ENCODE measurements at regions of chr17 and their contacts with region 1.

Region 1: GRCh38 chr17:44199553-44200477 is at the start of gene ATXN7L3:
- DNase-seq: peak; percentile 99
- ATAC-seq: peak; percentile 80 to 82
- H3K4me3 ChIP-seq: peak within 1 kb of the TSS; percentile 82 to 96 (median 86)
- H3K27ac ChIP-seq: peak within 1 kb of the TSS; percentile 94 to 98 (median 95)
- H3K4me1 ChIP-seq: peaks cover 9 to 15% of the 10 kb centered on the region in 2 donors
- H3K27me3 ChIP-seq: no peaks in the 10 kb centered on the region
- CTCF ChIP-seq: no peak
- POLR2A ChIP-seq: peak; percentile 59 to 65
- total RNA-seq, gene ATXN7L3: 39.3 to 46.0 (median 40.6) TPM

Region 2: DNA sequence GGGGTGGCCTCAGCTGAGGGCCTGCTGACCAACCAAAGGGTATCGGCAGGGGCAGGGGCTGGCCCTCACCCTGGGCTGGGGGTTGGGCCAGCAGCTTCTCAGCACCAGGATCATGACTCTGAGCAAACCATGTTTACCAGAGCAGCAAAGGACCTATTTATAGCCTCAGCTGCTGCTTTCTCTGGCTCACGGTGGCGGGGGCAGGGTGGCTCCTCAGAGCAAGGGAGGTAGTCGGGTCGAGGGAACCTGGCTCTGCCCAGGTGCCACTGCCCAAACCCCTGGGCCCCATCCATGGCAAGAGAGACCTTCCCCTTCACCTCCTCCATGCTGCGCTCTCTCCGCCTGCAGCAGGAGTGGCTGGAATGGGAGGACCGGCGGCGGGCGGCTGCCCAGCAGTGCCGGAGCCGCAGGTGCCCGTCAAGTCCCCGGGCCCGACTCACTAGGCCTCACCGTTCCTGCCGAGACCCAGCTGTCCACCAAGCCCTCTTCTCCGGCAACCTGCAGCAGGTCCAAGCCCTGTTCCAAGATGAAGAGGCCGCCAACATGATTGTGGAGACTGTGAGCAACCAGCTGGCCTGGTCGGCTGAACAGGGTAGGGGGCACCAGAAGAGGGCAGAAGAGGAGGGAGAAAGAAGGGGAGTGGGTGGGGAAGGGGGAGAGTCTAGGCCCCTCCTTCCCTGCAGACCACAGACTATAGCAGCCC is 29.2 kb before region 1 on chr17 and contains the start of gene ASB16:
- in situ Hi-C with region 1: no loop called
- intact Hi-C with region 1: no loop called
- DNase-seq: peak; percentile 80 to 90
- ATAC-seq: peak; percentile 88 to 91
- H3K4me3 ChIP-seq: peak within 1 kb of the TSS; percentile 60 to 82 (median 66)
- H3K27ac ChIP-seq: peak within 1 kb of the TSS; percentile 96 to 100 (median 99)
- H3K4me1 ChIP-seq: peaks cover 28 to 39% of the 10 kb centered on the region in 2 donors
- H3K27me3 ChIP-seq: no peaks in the 10 kb centered on the region
- CTCF ChIP-seq: peak in 3 of 5 experiments; percentile 15 to 44 (median 31)
- POLR2A ChIP-seq: peak; percentile 89 to 96
- total RNA-seq, gene ASB16: 13.2 to 134 (median 34.2) TPM

Region 3: DNA sequence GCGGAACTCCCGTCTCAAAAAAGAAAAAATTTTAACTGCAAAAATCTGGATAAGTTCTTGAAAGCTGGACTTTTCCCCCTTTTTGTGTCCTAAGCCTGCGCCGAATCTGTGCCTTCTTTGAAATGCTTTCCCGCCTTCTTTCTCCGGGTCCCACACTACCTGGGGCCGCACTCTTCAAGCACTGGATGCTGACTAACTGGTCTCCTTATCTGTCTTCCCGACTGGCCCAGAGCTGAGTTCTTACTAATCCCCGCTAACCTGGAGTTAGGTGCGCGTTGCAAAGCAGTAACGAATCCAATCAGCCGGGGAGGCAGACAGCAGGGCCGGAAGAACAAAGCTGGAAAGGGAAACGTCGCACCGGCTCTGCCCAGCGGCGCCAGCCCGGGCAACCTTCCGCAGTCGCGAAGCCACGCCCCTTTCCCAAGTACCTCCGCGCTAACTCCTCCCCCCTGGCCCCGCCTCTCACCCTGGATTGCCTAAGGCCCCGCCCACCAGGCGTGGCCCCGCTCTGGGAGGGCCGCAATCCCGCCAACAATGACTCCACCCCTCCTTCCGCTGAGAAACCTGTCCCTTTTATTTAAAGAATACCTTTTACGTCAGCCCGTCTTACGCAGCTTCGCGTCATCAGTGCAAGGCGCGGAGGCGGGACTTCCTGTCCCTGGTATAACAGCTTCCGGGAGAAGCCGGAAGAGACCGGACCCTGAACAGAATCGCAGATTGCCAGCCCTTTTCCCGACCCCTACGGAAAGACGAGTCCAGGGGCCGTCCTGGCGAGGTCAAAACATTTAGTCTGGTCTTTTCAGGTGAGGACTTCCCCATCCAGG is 13.3 kb before region 1 on chr17 and contains the start of gene TMUB2:
- in situ Hi-C with region 1: no loop called
- intact Hi-C with region 1: loop called (anchors 1 kb)
- DNase-seq: peak; percentile 98 to 99
- ATAC-seq: peak; percentile 93 to 97
- H3K4me3 ChIP-seq: peak within 1 kb of the TSS; percentile 88 to 99 (median 90)
- H3K27ac ChIP-seq: peak within 1 kb of the TSS; percentile 93 to 99 (median 96)
- H3K4me1 ChIP-seq: peaks cover 27 to 40% of the 10 kb centered on the region in 2 donors
- H3K27me3 ChIP-seq: no peaks in the 10 kb centered on the region
- CTCF ChIP-seq: no peak
- POLR2A ChIP-seq: peak; percentile 74 to 77
- total RNA-seq, gene TMUB2: 25.6 to 34.7 (median 27.4) TPM

Region 4: GRCh38 chr17:44218344-44219107 is 18.7 kb after region 1 on chr17:
- in situ Hi-C with region 1: no loop called
- intact Hi-C with region 1: loop called (anchors 1 kb)
- DNase-seq: peak; percentile 84 to 87
- ATAC-seq: peak; percentile 45 to 59
- H3K4me3 ChIP-seq: peak overlapping the region; percentile 51 to 93 (median 63)
- H3K27ac ChIP-seq: peak overlapping the region; percentile 95 to 100 (median 98)
- H3K4me1 ChIP-seq: peaks cover 46 to 55% of the 10 kb centered on the region in 2 donors
- H3K27me3 ChIP-seq: no peaks in the 10 kb centered on the region
- CTCF ChIP-seq: peak; percentile 35 to 72 (median 62)
- POLR2A ChIP-seq: peak; percentile 70 to 81

Region 5: DNA sequence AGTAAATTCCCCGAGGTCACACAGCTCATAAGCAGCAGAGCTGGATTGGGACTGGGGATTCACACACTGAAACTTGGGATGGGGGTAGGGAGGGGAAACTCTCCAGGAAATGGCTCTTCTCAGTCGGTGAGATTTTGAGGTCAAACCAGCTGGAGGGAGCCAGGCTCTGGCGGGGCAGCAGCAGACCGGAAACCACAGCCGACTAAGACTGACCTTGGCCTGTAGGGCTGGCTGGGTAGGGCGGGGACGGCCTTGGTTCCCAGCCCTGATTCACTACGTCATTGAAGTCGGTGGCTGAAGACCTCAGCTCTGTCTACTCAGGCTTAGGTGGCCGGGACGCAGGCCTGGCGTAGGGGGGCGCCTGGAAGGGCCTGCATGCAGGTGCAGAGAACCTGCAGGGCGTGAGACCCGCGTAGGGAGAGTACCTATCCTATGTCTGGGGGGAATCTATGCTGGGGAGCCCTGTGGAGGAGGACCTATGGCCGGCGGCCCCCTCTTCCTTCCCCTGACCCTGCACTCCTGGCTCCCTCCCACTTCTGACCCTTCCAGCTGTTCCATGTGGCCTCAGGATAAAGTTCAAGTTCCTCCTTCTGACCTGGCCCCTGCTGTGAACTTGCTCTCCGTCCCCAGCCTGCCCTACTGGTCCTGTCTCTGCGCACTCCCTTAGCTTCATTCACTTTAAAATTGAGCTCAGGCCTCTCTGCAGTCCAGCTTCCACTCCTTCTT is 80.0 kb after region 1 on chr17:
- in situ Hi-C with region 1: no loop called
- intact Hi-C with region 1: no loop called
- DNase-seq: peak; percentile 24 to 51
- ATAC-seq: peak; percentile 69 to 77
- H3K4me3 ChIP-seq: no peak overlapping the region
- H3K27ac ChIP-seq: peak overlapping the region; percentile 37 to 64 (median 58)
- H3K4me1 ChIP-seq: peaks cover 4 to 9% of the 10 kb centered on the region in 2 donors
- H3K27me3 ChIP-seq: no peaks in the 10 kb centered on the region
- CTCF ChIP-seq: no peak
- POLR2A ChIP-seq: no peak

Region 6: DNA sequence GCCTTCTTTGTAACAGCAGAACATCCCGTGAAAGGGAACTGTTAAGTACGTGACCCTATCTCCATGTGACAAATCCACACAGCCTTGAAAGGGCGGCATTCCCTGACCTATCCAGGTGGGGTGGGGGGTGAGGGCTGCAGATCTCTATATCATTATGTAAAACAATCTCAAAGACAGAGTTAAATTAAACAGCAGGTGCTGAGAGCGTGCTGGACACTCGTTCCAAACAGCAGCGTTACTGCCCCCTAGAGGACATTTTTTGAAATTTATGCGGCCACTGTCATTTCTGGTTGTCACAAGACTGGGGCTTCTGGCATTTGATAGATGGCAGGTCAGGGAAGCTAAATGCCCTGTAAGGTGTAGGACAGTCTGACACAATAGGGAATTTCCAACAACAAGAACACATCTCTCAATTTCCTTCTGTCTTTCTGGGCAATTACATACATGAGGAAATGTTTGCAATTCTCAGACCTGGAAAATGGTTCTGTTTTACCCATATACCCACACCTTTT is 131.5 kb after region 1 on chr17:
- in situ Hi-C with region 1: loop called in 3 of 4 experiments (anchors 5 to 10 kb)
- intact Hi-C with region 1: no loop called
- DNase-seq: peak; percentile 56 to 78
- ATAC-seq: peak; percentile 57 to 72
- H3K4me3 ChIP-seq: no peak overlapping the region
- H3K27ac ChIP-seq: peak overlapping the region; percentile 29 to 60 (median 47)
- H3K4me1 ChIP-seq: peaks cover 4 to 5% of the 10 kb centered on the region in 2 donors
- H3K27me3 ChIP-seq: no peaks in the 10 kb centered on the region
- CTCF ChIP-seq: peak; percentile 83 to 88 (median 85)
- POLR2A ChIP-seq: no peak